Cardiac septum (tissue), 1 donor: ENCODE measurements at regions of chr9 and their contacts with region 1.

Region 1: GRCh38 chr9:75088260-75088905 is at the start of gene OSTF1:
- DNase-seq: peak; percentile 98
- total RNA-seq, gene OSTF1: 25.5 TPM

Region 2: GRCh38 chr9:75027187-75028107 is 60.9 kb before region 1 on chr9:
- intact Hi-C with region 1: loop called (anchors 1 kb)
- DNase-seq: peak; percentile 80